Panc1 (cell line): ENCODE measurements at regions of chr10 and their contacts with region 1.

Region 1: GRCh38 chr10:75187961-75188426 is 22.6 kb upstream of the VDAC2 start:
- DNase-seq: no peak
- ATAC-seq: peak; percentile 84
- H3K4me3 ChIP-seq: no peak overlapping the region
- H3K27ac ChIP-seq: no peak overlapping the region
- H3K4me1 ChIP-seq: peaks cover 9% of the 10 kb centered on the region
- H3K27me3 ChIP-seq: no peaks in the 10 kb centered on the region
- CTCF ChIP-seq: peak; percentile 94

Region 2: DNA sequence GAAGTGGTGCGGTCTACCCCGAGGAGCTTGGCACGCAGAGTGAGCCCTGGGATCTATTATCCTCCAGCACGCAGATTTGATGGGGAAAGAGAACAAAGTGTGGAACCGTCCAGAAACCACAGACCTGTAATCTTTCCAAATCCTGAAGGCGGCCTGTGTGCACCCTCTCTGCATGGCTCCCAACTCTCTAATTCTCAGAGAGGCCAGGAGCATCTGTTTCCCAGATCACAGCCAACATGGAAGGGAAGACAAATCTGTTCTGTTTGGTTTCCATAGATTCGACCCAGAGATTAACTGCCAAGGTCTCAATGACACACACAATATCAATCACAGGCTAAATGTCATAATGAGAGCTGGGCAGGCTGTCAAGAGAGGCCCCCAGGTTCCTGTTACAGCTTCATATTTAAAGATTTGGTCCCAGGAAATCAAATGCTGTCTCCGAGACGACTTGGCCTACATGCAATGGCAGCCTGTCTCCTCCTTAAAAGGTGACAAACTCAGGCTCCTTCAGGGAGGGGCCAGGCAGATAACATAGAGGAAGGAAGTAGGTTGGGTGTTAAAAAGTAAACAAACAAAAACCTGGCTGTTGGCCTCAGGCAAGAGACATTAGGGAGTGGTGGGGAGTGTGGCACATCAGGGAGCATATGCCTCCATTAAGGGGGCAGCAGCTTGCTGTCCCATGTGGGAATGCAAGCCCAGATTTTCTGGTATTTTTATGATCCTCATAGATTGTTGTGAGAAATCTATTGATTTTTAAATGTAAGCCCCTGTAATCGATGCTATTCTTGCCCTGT is 125.3 kb before region 1 on chr10:
- CTCF ChIA-PET with region 1: no interaction called
- POLR2A ChIA-PET with region 1: no interaction called
- in situ Hi-C with region 1: no loop called
- intact Hi-C with region 1: no loop called
- DNase-seq: no peak
- ATAC-seq: no peak
- H3K4me3 ChIP-seq: no peak overlapping the region
- H3K27ac ChIP-seq: no peak overlapping the region
- H3K4me1 ChIP-seq: no peaks in the 10 kb centered on the region
- H3K27me3 ChIP-seq: no peaks in the 10 kb centered on the region
- CTCF ChIP-seq: no peak

Region 3: DNA sequence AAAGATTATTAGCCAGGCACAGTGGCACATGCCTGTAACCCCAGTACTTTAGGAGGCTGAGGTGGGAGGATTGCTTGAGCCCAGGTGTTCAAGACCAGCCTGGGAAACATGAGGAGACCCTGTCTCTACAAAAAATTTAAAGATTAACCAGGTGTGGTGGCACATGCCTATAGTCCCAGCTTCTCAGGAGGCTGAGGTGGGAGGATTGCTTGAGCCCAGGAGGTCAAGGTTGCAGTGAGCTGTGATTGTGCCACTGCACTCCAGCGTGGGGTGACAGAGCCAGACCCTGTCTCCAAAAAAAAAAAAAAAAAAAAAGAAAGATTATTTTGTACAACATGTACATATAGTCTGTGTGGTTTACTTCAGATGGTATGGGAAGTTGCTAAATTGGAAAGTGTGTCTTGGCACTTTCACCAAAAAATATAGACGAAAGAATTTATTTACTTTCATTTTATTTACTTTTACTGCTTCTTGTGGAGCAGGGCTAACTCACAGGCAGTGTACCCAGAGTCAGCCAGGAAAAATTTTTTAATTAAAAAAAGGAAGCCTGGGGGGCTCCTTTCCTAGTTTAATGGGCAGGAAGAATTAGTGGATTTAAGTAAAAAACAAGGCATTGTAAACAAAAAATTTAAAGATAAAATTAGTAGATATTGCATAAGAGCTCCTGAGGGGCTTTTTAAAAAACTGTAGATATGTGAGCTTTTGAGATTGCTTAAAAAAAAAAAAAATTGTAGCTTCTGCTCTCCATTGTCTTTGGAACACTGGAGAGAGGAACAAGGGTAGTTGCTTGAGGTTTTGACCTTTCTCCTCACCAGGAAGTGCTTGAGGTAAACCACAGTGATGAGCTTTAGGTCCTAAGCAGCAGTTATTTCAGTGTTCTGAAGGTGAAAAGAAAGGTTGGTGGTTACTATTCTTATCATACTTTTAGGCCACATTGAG is 22.0 kb before region 1 on chr10:
- CTCF ChIA-PET with region 1: no interaction called
- POLR2A ChIA-PET with region 1: interaction called, 11 read pairs
- in situ Hi-C with region 1: no loop called
- intact Hi-C with region 1: no loop called
- DNase-seq: no peak
- ATAC-seq: no peak
- H3K4me3 ChIP-seq: no peak overlapping the region
- H3K27ac ChIP-seq: no peak overlapping the region
- H3K4me1 ChIP-seq: no peaks in the 10 kb centered on the region
- H3K27me3 ChIP-seq: no peaks in the 10 kb centered on the region
- CTCF ChIP-seq: no peak